GM13977 (cell line): ENCODE measurements at regions of chr10 and their contacts with region 1.

Region 1: GRCh38 chr10:87861953-87862678 is 1.2 kb downstream of the KLLN start:
- DNase-seq: peak; percentile 91
- CTCF ChIP-seq: no peak

Region 2: DNA sequence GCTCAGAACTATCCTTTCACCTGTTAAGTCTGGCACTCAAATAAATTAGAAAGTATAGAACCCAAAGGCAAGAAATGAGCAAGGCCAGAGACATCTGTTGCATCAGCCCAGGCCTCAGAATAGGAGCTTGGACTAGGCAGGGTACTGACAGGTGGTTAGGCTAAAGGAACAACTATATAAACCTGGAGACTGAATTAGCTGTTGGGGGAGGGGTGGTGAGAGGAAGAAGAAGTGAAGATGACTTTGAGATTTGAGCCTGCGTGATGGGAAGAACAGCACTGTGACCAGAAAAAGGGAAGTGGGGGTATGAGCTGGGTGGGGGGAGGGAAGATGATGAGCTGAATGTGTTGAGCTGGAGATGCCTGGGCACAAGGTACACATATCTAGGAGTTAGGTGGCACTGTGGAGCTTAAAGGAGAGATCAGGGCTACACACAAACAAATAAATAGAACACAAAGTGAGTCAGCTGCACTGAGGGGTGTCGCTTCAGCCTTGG is 246.0 kb after region 1 on chr10:
- in situ Hi-C with region 1: loop called (anchors 10 kb)
- DNase-seq: no peak
- CTCF ChIP-seq: peak; percentile 31